CD8-positive, alpha-beta memory T cell (primary cell): ENCODE measurements at regions of chr14 and their contacts with region 1.

Region 1: DNA sequence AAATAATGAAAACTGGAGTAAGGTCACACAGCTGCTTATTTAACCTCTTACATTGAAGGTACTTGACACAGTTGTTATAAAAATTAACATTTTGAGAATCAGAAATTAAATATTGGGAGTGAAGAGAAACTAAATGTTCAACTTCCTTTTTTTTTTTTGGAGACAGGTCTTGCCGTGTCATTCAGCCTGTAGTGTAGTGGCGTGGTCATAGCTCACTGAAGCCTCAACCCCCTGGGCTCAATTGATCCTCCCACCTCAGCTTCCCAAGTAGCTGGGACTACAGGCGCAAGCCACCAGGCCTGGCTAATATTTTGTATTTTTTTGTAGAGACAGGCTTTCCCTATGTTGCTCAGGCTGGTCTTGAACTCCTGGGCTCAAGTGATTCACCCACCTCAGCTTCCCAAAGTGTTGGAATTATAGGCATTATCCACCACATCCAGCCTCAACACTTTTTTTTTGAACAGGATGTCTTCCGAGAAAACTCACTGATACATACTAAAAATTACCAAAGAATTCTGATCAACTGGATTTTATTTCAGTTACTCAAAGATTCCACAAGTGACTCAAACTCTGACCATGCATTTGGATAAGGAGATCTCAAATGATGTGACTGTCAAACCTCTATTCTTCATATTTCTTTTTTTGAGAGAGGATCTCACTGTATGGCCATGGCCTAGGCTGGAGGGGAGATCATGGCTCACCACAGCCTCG is 35.4 kb downstream of the SGPP1 start:
- DNase-seq: no peak
- H3K4me3 ChIP-seq: no peak overlapping the region
- H3K4me3 Mint-ChIP-seq: no peak overlapping the region
- H3K27ac ChIP-seq: no peak overlapping the region
- H3K27ac Mint-ChIP-seq: no peak overlapping the region
- H3K4me1 ChIP-seq: peaks cover 4% of the 10 kb centered on the region
- H3K4me1 Mint-ChIP-seq: peaks cover 3 to 8% (median 6%) of the 10 kb centered on the region in 3 donors
- H3K27me3 ChIP-seq: no peaks in the 10 kb centered on the region
- H3K27me3 Mint-ChIP-seq: no peaks in the 10 kb centered on the region

Region 2: DNA sequence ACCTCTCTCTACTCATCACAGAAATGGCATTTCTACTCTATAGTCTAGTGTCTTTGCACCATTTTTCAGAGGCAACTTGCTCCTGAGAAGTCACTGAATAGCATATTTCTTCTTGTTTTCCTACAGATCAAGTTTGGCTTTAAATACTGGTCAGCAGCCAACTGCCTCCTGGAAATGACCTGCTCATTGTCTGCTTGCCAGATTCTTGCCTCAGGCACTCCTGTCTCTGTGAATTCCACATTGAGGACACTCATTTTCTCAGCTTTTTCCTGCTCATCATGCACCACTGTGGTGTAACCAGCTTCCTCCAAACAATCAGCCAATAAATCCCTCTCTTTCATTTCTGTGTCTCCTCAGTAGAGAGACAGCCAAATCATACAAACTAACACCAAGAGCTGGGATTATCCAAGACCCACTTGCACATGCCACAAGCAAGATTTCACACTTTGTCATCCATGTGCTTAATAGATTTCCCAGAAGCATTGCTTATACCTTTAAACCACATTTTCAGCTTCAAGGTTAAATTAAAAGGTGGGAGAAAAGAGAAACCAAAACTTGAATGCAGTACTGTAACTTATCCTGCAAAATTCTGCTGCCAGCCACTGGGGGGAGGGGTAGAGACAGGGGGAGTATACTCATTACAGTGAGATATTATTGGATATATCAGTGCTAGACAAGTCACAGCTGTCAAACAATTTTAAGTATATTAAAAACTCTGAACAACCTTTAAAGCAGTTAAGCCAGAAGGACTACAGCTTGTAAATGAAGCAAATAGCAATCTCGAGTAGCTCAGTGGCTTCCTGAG is 254.3 kb before region 1 on chr14:
- CTCF ChIA-PET with region 1: no interaction called
- POLR2A ChIA-PET with region 1: interaction called, 13 read pairs
- DNase-seq: peak in 2 of 5 donors; percentile 6 to 8
- H3K4me3 ChIP-seq: no peak overlapping the region
- H3K4me3 Mint-ChIP-seq: peak overlapping the region; percentile 0 to 55 (median 38)
- H3K27ac ChIP-seq: no peak overlapping the region
- H3K27ac Mint-ChIP-seq: peak overlapping the region; percentile 1 to 80 (median 36)
- H3K4me1 ChIP-seq: peaks cover 13% of the 10 kb centered on the region
- H3K4me1 Mint-ChIP-seq: peaks cover 68 to 83% (median 81%) of the 10 kb centered on the region in 3 donors
- H3K27me3 ChIP-seq: no peaks in the 10 kb centered on the region
- H3K27me3 Mint-ChIP-seq: no peaks in the 10 kb centered on the region